Activated CD4-positive, alpha-beta T cell treated with anti-CD3 and anti-CD28 coated beads, Interleukin-2, amount 10 ng/mL, durations not matched to agents 24 days and 14 days (primary cell): ENCODE measurements at regions of chr12 and their contacts with region 1.

Region 1: GRCh38 chr12:110577717-110578521 is 5.2 kb downstream of the PPTC7 start:
- DNase-seq: peak; percentile 87
- H3K4me3 Mint-ChIP-seq: peak overlapping the region; percentile 98
- H3K27ac Mint-ChIP-seq: peak overlapping the region; percentile 97
- H3K4me1 Mint-ChIP-seq: peaks cover 59% of the 10 kb centered on the region
- H3K27me3 Mint-ChIP-seq: no peaks in the 10 kb centered on the region

Region 2: DNA sequence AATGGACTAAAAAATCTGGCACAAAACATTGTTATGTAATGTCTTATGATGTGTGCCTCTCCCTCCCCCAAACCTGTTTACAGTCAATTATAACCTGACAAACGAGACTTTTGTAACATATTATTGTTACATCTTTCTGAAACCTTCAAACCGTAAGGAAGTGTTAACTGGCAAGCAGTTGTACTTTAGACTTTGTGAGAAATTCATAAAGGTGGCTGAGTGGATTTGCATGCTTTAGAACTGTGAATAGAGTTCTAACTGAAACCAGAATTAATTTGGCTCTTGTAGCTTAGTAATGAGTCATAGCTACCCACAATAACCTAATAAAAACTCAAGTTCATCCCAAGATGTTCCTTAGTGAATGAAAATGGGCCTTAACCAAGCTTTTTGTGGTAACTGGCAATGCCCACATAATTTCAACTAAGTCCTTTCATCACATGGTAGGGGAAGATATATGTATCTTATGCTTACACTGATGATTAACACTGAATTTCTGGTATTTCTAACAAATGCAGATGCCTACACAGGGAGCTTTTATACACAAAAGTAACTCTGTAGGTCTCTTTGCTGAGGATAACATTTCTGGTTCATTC is 46.1 kb before region 1 on chr12:
- intact Hi-C with region 1: loop called (anchors 2 kb)
- DNase-seq: no peak
- H3K4me3 Mint-ChIP-seq: no peak overlapping the region
- H3K27ac Mint-ChIP-seq: peak overlapping the region; percentile 70
- H3K4me1 Mint-ChIP-seq: peaks cover 27% of the 10 kb centered on the region
- H3K27me3 Mint-ChIP-seq: no peaks in the 10 kb centered on the region

Region 3: DNA sequence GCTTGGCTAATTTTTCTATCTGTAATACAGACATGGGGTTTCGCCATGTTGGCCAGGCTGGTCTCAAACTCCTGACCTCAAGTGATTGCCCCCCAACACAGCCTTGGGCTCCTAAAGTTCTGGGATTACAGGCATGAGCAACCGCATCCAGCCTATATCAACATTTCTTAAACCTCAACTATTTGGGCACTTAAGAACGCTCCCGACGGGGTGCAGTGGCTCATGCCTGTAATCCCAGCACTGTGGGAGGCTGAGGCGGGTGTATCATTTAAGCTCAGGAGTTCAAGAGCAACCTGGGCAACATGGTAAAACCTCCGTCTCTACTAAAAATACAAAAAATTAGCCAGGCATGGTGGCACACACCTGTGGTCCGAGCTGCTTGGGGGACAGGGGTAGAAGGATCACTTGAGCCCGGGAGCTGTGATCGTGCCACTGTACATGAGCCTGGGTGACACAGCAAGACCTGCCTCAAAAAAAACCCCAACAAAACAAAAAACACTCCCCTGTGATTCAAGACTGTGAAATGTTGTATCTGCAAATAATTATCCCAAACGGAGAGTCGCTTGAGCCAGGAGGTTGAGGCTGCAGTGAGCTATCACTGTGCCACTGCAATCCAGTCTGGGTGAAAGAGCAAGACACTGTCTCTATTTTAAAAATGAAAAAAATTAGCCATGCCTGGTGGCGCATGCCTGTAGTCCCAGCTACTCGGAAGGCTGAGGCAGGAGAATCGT is 16.3 kb before region 1 on chr12:
- intact Hi-C with region 1: loop called (anchors 1 kb)
- DNase-seq: no peak
- H3K4me3 Mint-ChIP-seq: peak overlapping the region; percentile 61
- H3K27ac Mint-ChIP-seq: peak overlapping the region; percentile 78
- H3K4me1 Mint-ChIP-seq: peaks cover 51% of the 10 kb centered on the region
- H3K27me3 Mint-ChIP-seq: no peaks in the 10 kb centered on the region